Activated B cell treated with CpG ODN at 0.5 μM for 24 hours (primary cell): ENCODE measurements at regions of chr3 and their contacts with region 1.

Region 1: GRCh38 chr3:138915503-138916498 is 31.1 kb downstream of the FOXL2 start:
- DNase-seq: peak; percentile 84
- ATAC-seq: peak; percentile 86
- H3K4me3 Mint-ChIP-seq: peak overlapping the region; percentile 83
- H3K27ac Mint-ChIP-seq: peak overlapping the region; percentile 75
- H3K4me1 Mint-ChIP-seq: peaks cover 5% of the 10 kb centered on the region
- H3K27me3 Mint-ChIP-seq: peaks cover 6% of the 10 kb centered on the region
- CTCF ChIP-seq: peak; percentile 78

Region 2: GRCh38 chr3:138417559-138417982 is 498.2 kb before region 1 on chr3:
- CTCF ChIA-PET with region 1: interaction called, 63 read pairs
- POLR2A ChIA-PET with region 1: no interaction called
- intact Hi-C with region 1: loop called (anchors 1 kb)
- DNase-seq: no peak
- ATAC-seq: peak; percentile 49
- H3K4me3 Mint-ChIP-seq: no peak overlapping the region
- H3K27ac Mint-ChIP-seq: no peak overlapping the region
- H3K4me1 Mint-ChIP-seq: no peaks in the 10 kb centered on the region
- H3K27me3 Mint-ChIP-seq: peaks cover 24% of the 10 kb centered on the region
- CTCF ChIP-seq: peak; percentile 79

Region 3: DNA sequence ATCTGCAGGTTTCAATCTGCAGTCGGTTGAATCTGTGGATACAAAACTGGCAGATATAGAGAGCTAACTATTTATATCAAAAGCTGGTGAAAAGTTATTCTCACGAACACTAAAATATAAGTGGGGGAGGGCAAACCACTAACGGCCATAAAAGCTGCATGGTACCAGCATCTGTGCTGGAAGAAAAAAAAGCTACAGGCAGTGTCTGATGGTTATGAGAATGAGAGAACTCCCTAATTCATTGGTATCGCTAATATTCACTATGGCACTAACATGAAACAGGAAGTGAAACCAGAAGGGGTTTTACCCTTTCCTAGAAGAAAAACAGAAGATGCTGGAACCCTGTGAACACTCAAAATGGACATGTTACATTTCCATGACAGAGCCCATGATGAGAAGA is 337.7 kb before region 1 on chr3:
- CTCF ChIA-PET with region 1: interaction called, 13 read pairs
- POLR2A ChIA-PET with region 1: no interaction called
- intact Hi-C with region 1: no loop called
- DNase-seq: no peak
- ATAC-seq: peak; percentile 87
- H3K4me3 Mint-ChIP-seq: peak overlapping the region; percentile 37
- H3K27ac Mint-ChIP-seq: no peak overlapping the region
- H3K4me1 Mint-ChIP-seq: peaks cover 23% of the 10 kb centered on the region
- H3K27me3 Mint-ChIP-seq: peaks cover 5% of the 10 kb centered on the region
- CTCF ChIP-seq: no peak

Region 4: GRCh38 chr3:138608322-138609135 is 307.3 kb before region 1 on chr3 and contains the start of gene FAIM:
- CTCF ChIA-PET with region 1: interaction called, 13 read pairs
- POLR2A ChIA-PET with region 1: interaction called, 6 read pairs
- intact Hi-C with region 1: no loop called
- DNase-seq: peak; percentile 71
- ATAC-seq: peak; percentile 75
- H3K4me3 Mint-ChIP-seq: peak within 1 kb of the TSS; percentile 87
- H3K27ac Mint-ChIP-seq: peak within 1 kb of the TSS; percentile 83
- H3K4me1 Mint-ChIP-seq: peaks cover 23% of the 10 kb centered on the region
- H3K27me3 Mint-ChIP-seq: no peaks in the 10 kb centered on the region
- CTCF ChIP-seq: no peak
- total RNA-seq, gene FAIM: 10.5 and 11.5 TPM in 2 replicates

Region 5: DNA sequence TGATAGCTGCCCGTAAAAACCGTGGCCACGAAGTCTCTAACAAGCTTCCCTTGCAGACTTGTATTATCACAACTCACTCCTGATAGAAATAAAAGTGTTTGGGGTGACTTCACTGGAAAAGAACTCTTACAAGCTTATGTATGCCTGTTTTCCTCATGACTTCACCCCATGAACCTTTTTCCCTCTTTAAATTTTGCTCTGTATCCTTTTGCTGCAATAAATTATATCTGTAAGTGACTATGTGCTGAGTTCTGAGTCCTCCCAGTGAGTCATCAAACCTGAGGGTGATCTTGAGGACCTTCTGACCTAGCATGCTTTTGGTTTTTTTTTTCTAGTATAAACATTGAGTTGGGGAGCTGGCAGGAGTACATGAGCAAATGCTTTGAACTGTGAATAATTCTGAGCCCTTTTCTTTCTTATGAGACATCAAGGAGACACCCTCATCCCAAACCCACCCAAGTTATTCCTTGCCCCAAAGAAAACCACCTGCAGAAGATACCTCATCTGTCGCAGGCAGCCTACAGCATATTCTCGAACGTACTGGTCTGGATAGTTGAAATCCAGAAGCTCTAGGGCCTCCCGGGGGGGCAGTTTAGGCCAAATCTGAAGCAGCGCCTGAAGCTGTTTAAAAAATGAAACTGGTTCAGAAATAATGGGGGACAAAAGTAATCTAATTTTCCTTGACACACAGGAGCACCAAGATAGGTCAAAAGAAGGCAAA is 221.4 kb before region 1 on chr3:
- CTCF ChIA-PET with region 1: interaction called, 79 read pairs
- POLR2A ChIA-PET with region 1: interaction called, 8 read pairs
- intact Hi-C with region 1: loop called (anchors 1 kb)
- DNase-seq: no peak
- ATAC-seq: no peak
- H3K4me3 Mint-ChIP-seq: no peak overlapping the region
- H3K27ac Mint-ChIP-seq: no peak overlapping the region
- H3K4me1 Mint-ChIP-seq: peaks cover 9% of the 10 kb centered on the region
- H3K27me3 Mint-ChIP-seq: no peaks in the 10 kb centered on the region
- CTCF ChIP-seq: no peak

Region 6: GRCh38 chr3:138898301-138898700 is 17.5 kb before region 1 on chr3:
- CTCF ChIA-PET with region 1: interaction called, 15 read pairs
- POLR2A ChIA-PET with region 1: interaction called, 3 read pairs
- intact Hi-C with region 1: no loop called
- DNase-seq: no peak
- ATAC-seq: no peak
- H3K4me3 Mint-ChIP-seq: no peak overlapping the region
- H3K27ac Mint-ChIP-seq: no peak overlapping the region
- H3K4me1 Mint-ChIP-seq: no peaks in the 10 kb centered on the region
- H3K27me3 Mint-ChIP-seq: no peaks in the 10 kb centered on the region
- CTCF ChIP-seq: no peak